HCT116 (cell line): ENCODE measurements at regions of chr17 and their contacts with region 1.

Region 1: DNA sequence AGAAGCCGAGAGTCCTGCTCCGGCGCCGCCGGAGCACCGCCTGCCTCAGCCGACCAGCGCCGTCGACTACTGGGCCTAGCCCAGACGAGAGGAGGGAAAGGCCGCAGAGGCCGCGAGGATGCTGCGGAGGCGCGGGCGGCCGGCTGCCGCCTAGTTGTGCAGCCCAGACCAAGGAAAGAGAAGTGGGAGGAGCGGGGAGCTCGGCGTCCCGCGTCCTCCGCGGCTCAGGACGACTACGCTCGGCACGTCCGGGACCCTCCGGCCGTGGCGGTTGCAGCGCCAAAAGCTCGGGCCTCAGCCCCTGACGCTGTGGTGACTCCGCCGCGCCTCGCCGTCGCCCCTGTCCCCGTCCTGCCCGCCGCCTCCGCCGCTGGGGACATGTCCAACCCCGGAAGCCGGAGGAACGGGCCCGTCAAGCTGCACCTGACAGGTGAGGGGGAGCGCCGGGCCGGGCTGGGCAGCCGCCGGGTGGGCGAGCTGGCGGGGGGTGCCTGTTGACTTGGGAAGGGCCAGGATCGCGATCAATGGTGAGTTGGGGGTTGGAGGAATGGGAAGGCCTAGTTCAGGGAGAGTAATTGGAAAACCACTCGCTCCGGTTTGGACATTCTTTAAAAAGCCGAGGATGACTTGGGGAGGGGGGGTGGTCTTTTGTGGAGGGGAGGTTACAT is 37.7 kb downstream of the RNF135 start:
- DNase-seq: no peak
- ATAC-seq: no peak
- H3K4me3 ChIP-seq: no peak overlapping the region
- H3K27ac ChIP-seq: no peak overlapping the region
- H3K4me1 ChIP-seq: no peaks in the 10 kb centered on the region
- H3K27me3 ChIP-seq: no peaks in the 10 kb centered on the region
- CTCF ChIP-seq: no peak
- POLR2A ChIP-seq: no peak
- RAD21 ChIP-seq: no peak

Region 2: GRCh38 chr17:30821871-30822723 is 186.4 kb before region 1 on chr17:
- CTCF ChIA-PET with region 1: no interaction called
- POLR2A ChIA-PET with region 1: no interaction called
- RAD21 ChIA-PET with region 1: no interaction called
- intact Hi-C with region 1: no loop called
- DNase-seq: no peak
- ATAC-seq: no peak
- H3K4me3 ChIP-seq: no peak overlapping the region
- H3K27ac ChIP-seq: no peak overlapping the region
- H3K4me1 ChIP-seq: peaks cover 15 to 31% of the 10 kb centered on the region in 2 experiments
- H3K27me3 ChIP-seq: no peaks in the 10 kb centered on the region
- CTCF ChIP-seq: no peak
- POLR2A ChIP-seq: no peak
- RAD21 ChIP-seq: no peak

Region 3: GRCh38 chr17:31216053-31216751 is 207.7 kb after region 1 on chr17:
- CTCF ChIA-PET with region 1: interaction called, 8 read pairs
- POLR2A ChIA-PET with region 1: no interaction called
- RAD21 ChIA-PET with region 1: no interaction called
- intact Hi-C with region 1: loop called (anchors 1 kb)
- DNase-seq: peak; percentile 19
- ATAC-seq: no peak
- H3K4me3 ChIP-seq: no peak overlapping the region
- H3K27ac ChIP-seq: no peak overlapping the region
- H3K4me1 ChIP-seq: no peaks in the 10 kb centered on the region
- H3K27me3 ChIP-seq: no peaks in the 10 kb centered on the region
- CTCF ChIP-seq: peak in 2 of 3 experiments; percentile 56 to 71; a peak in 4 of 6 replicates
- POLR2A ChIP-seq: no peak
- RAD21 ChIP-seq: peak; percentile 70

Region 4: DNA sequence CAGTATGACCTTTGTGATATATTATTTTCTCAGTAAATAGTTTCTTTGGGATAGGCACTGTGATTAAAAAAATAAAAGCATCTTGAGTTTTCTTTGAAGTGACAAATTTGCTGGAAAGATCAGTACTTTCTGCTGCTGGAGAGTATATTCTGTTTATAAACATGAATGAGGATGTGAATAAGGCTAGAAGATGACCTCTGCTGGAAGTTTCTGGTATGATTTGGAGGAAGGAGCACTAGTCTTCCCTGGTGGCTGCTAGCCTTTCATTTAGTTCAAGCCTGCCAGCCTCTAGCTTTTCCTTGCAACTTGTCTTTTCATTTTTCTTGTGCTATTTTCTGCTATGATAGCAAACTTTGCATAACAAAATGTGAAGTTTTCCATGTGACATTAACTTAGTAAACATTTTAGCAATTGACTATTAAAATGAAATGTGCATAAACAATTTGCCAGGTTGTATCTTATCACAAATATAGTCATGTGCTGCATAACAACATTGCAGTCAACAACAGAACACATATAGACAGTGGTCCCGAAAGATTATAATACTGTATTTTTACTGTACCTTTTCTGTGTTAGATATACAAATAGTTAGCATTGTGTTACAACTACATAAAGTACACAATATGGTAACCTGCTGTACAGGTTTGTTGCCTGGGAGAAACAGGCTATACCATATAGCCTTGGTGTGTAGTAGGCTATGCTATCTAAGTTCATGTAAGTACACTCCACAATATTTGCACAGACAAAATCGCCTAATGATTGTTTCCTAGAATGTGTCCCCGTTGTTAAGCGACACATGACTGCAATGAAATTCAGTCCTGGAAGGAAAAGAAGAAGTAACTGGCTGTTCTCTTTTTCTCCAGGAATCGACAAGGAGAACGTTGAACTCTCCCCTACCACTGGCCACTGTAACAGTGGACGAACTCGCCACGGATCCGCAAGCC is 364.9 kb after region 1 on chr17:
- CTCF ChIA-PET with region 1: no interaction called
- POLR2A ChIA-PET with region 1: no interaction called
- RAD21 ChIA-PET with region 1: no interaction called
- intact Hi-C with region 1: loop called (anchors 1 kb)
- DNase-seq: peak; percentile 8
- ATAC-seq: peak; percentile 84
- H3K4me3 ChIP-seq: no peak overlapping the region
- H3K27ac ChIP-seq: no peak overlapping the region
- H3K4me1 ChIP-seq: no peaks in the 10 kb centered on the region
- H3K27me3 ChIP-seq: no peaks in the 10 kb centered on the region
- CTCF ChIP-seq: peak; percentile 45 to 66 (median 55); a peak in 5 of 6 replicates
- POLR2A ChIP-seq: no peak
- RAD21 ChIP-seq: peak; percentile 64